ENCODE measurements at regions of chr5 and their contacts with region 1.

Region 1: GRCh38 chr5:9544502-9545135 is 1.3 kb downstream of the SEMA5A start:
- DNase-seq: peak; percentile 87
- ATAC-seq: peak; percentile 88

Region 2: DNA sequence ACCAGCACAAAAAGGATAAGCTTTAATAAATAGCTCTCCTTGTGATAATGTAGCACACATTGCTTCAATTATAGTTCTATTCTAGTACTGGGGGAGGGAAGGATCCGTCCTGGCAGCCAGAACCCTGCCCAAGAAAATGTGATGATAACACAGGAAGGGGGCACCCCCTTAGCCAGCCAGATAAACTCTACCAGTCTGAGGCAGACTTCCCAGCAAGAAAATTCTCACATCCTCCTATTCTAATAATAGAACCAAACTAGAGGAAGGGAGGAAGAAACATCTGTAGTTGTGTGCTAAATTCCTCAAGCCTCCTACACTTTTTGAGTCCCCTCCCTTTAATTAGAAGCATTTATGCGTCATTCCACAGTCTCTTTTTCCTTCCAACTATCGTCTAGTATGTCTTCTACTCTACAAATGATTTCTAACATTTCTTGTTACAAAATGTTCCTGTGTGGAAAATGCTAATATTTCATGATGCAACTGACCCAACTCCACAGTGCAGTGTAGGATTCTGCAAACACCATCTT is 259.8 kb before region 1 on chr5:
- intact Hi-C with region 1: loop called (anchors 10 kb)
- DNase-seq: peak; percentile 43
- ATAC-seq: peak; percentile 87

Region 3: GRCh38 chr5:9361835-9362234 is 182.8 kb before region 1 on chr5:
- intact Hi-C with region 1: loop called (anchors 5 kb)
- DNase-seq: no peak
- ATAC-seq: peak; percentile 78